Sciatic nerve (tissue), 2 donors: ENCODE measurements at regions of chr20 and their contacts with region 1.

Region 1: GRCh38 chr20:55533632-55534031 is 471.7 kb downstream of the CBLN4 start:
- DNase-seq: no peak
- ATAC-seq: no peak

Region 2: GRCh38 chr20:55500130-55500529 is 33.5 kb before region 1 on chr20:
- intact Hi-C with region 1: loop called (anchors 1 kb)
- DNase-seq: no peak
- ATAC-seq: no peak

Region 3: DNA sequence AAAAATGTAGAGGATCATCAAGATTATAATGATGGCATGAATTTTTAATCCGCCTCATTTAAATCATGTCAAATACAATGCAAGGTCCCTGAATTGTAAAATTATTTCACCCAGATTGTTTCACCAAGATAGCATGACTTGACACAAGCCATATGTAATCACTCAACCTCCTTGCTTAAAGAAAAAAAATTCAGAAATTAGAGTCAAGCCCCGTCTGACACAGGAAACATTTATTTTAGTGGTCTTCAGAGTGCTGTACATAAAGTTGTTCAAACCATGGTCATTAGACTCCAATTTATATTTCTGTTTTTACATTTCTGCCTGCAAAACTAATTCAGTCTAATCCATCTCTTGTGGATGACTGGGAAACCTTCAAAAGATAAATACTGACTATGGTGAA is 271.5 kb after region 1 on chr20:
- intact Hi-C with region 1: no loop called
- DNase-seq: no peak
- ATAC-seq: no peak